K562 (cell line): ENCODE measurements at regions of chr10 and their contacts with region 1.

Region 1: DNA sequence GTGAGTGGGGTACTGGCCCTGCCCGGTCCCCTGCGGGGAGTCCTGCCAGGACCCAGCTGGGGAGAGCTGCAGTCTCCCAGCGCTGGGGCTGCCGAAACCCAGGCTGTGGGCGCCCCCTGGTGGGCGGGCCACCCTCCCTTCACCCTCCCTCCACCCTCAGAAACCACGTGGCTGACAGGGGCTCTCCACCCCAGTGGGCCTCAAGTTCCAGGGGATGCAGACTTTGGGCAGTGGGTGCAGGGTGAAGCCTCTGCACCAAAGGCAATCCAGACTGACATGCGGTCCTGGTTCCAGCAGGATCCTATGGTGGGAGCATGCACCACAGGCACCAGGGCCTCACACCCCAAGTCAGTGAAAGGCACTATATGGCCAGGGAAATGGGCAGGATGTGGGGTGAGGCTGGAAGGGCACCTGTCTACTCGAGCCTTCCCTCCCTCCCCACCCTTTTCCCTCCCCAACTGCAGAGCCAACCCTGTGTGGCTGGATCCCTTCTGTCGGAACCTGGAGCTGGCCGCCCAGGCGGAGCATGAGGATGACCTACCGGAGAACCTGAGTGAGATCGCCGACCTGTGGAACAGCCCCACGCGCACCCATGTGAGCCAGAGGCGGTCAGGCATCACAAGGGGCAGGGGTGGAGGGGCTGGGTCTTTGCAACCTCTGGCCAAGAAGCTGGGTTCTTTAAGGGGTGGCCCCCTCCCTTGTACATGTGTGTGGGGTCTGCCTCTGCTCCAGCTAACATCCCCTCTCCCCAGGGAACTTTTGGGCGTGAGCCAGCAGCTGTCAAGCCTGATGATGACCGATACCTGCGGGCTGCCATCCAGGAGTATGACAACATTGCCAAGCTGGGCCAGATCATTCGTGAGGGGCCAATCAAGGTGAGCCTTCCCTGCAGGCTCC is 38.8 kb downstream of the PSAP start:
- DNase-seq: peak; percentile 83 to 92 (median 90)
- ATAC-seq: peak; percentile 94
- H3K4me3 ChIP-seq: no peak overlapping the region
- H3K27ac ChIP-seq: no peak overlapping the region
- H3K4me1 ChIP-seq: peaks cover 0 to 43% of the 10 kb centered on the region in 2 experiments; a peak in 3 of 5 replicates
- H3K27me3 ChIP-seq: no peaks in the 10 kb centered on the region
- CTCF ChIP-seq: peak; percentile 91 to 95 (median 94)
- EP300 ChIP-seq: no peak
- POLR2A ChIP-seq: no peak
- RAD21 ChIP-seq: peak; percentile 96 to 97

Region 2: DNA sequence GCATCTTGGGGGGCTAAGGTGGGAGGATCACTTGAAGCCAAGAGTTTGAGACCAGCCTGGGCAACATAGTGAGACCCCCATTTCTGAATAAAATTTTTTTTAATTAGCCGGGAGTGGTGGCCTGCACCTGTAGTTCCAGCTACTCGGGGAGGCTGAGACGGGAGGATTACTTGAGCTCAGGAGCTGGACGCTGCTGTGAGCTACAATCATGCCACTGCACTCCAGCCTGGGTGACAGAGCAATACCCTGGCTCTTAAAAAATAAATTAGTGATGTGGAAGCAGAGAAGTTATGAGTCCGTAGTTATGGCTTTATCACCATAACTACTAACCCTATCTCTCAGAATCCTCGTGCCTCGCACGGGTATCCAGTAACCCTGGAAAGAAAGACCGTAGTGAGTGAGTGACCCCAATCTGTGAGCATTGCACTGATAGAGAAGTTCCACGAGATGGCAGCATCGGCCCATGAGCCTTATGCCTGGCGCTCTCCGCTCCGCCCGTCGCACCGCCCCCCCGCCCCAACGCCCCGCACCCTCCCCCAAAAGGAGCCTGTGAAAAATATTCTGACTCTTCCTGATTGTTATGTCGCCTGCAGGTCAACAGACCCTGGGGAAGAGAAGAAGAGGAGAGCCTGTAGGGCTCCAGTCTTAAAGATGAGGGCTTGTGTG is 498.1 kb before region 1 on chr10:
- CTCF ChIA-PET with region 1: interaction called, 8 read pairs
- POLR2A ChIA-PET with region 1: no interaction called
- in situ Hi-C with region 1: loop called (anchors 5 kb)
- intact Hi-C with region 1: loop called (anchors 5 kb)
- DNase-seq: peak; percentile 79 to 91 (median 90)
- ATAC-seq: peak; percentile 73
- H3K4me3 ChIP-seq: no peak overlapping the region
- H3K27ac ChIP-seq: no peak overlapping the region
- H3K4me1 ChIP-seq: peaks cover 8 to 9% of the 10 kb centered on the region in 2 experiments; a peak in 4 of 5 replicates
- H3K27me3 ChIP-seq: peaks cover 0 to 10% of the 10 kb centered on the region in 2 experiments; a peak in 2 of 5 replicates
- CTCF ChIP-seq: peak; percentile 68 to 82 (median 76)
- EP300 ChIP-seq: no peak
- POLR2A ChIP-seq: no peak
- RAD21 ChIP-seq: peak; percentile 64 to 78

Region 3: DNA sequence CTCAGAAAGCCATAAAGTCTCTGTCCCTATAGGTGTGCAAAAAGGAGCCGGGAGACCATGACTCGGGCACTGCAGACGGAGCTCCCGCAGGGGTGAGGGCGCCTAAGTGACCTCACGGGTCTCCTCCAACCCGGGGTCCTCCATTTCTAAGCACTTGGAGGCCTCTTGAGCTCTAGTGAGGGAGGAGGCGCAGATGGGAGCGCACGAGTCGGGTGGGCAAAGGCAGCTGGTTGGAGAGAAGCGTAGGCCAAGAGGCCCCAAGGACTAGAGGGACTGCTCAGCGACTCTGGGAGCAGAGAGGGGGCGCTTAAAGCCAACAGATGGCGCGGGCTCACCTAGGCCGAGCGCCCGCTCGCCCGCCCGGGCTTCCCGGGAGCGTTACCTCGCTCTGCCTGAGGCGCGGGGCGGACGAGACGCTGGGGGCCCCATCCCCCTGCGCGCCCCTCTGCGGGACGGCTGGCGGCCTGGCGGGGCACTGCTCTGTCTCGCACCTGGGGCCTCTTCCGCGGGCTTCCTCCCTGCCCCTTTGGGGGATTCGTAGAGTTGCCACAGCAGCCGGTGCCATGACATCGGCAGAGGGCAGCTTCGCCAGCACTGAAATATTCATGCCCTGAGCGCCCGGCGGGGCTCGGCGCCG is 416.1 kb before region 1 on chr10:
- CTCF ChIA-PET with region 1: no interaction called
- POLR2A ChIA-PET with region 1: no interaction called
- in situ Hi-C with region 1: no loop called
- intact Hi-C with region 1: loop called (anchors 5 kb)
- DNase-seq: peak; percentile 57 to 63 (median 59)
- ATAC-seq: peak; percentile 92
- H3K4me3 ChIP-seq: no peak overlapping the region
- H3K27ac ChIP-seq: no peak overlapping the region
- H3K4me1 ChIP-seq: peaks cover 0 to 20% of the 10 kb centered on the region in 2 experiments; a peak in 2 of 5 replicates
- H3K27me3 ChIP-seq: peaks cover 64 to 91% of the 10 kb centered on the region in 2 experiments
- CTCF ChIP-seq: peak; percentile 62 to 73 (median 71)
- EP300 ChIP-seq: no peak
- POLR2A ChIP-seq: no peak
- RAD21 ChIP-seq: peak; percentile 61 to 80

Region 4: GRCh38 chr10:71671994-71672946 is 140.0 kb before region 1 on chr10:
- CTCF ChIA-PET with region 1: no interaction called
- POLR2A ChIA-PET with region 1: no interaction called
- in situ Hi-C with region 1: no loop called
- intact Hi-C with region 1: no loop called
- DNase-seq: peak; percentile 41 to 73 (median 58)
- ATAC-seq: peak; percentile 48
- H3K4me3 ChIP-seq: no peak overlapping the region
- H3K27ac ChIP-seq: no peak overlapping the region
- H3K4me1 ChIP-seq: peaks cover 0 to 21% of the 10 kb centered on the region in 2 experiments; a peak in 3 of 5 replicates
- H3K27me3 ChIP-seq: no peaks in the 10 kb centered on the region
- CTCF ChIP-seq: no peak
- EP300 ChIP-seq: no peak
- POLR2A ChIP-seq: no peak
- RAD21 ChIP-seq: no peak

Region 5: GRCh38 chr10:71696628-71697326 is 115.5 kb before region 1 on chr10:
- CTCF ChIA-PET with region 1: no interaction called
- POLR2A ChIA-PET with region 1: interaction called, 3 read pairs
- in situ Hi-C with region 1: no loop called
- intact Hi-C with region 1: loop called (anchors 5 kb)
- DNase-seq: peak; percentile 86 to 92 (median 90)
- ATAC-seq: peak; percentile 94
- H3K4me3 ChIP-seq: no peak overlapping the region
- H3K27ac ChIP-seq: no peak overlapping the region
- H3K4me1 ChIP-seq: peaks cover 13 to 51% of the 10 kb centered on the region in 2 experiments
- H3K27me3 ChIP-seq: no peaks in the 10 kb centered on the region
- CTCF ChIP-seq: peak; percentile 93 to 99 (median 95)
- EP300 ChIP-seq: no peak
- POLR2A ChIP-seq: no peak
- RAD21 ChIP-seq: peak; percentile 64 to 89

Region 6: GRCh38 chr10:71780722-71781121 is 31.5 kb before region 1 on chr10:
- CTCF ChIA-PET with region 1: interaction called, 4 read pairs
- POLR2A ChIA-PET with region 1: interaction called, 3 read pairs
- in situ Hi-C with region 1: no loop called
- intact Hi-C with region 1: loop called (anchors 2 kb)
- DNase-seq: peak; percentile 38 to 66 (median 50)
- ATAC-seq: peak; percentile 68
- H3K4me3 ChIP-seq: no peak overlapping the region
- H3K27ac ChIP-seq: no peak overlapping the region
- H3K4me1 ChIP-seq: peaks cover 0 to 3% of the 10 kb centered on the region in 2 experiments; a peak in 2 of 5 replicates
- H3K27me3 ChIP-seq: peaks cover 26 to 57% of the 10 kb centered on the region in 2 experiments
- CTCF ChIP-seq: peak; percentile 67 to 78 (median 68)
- EP300 ChIP-seq: no peak
- POLR2A ChIP-seq: no peak
- RAD21 ChIP-seq: peak; percentile 65 to 83

Region 7: GRCh38 chr10:71829171-71829570 is 16.9 kb after region 1 on chr10:
- CTCF ChIA-PET with region 1: no interaction called
- POLR2A ChIA-PET with region 1: interaction called, 31 read pairs
- in situ Hi-C with region 1: no loop called
- intact Hi-C with region 1: loop called (anchors 2 kb)
- DNase-seq: peak in 1 of 4 experiments; percentile 50
- ATAC-seq: peak; percentile 23; the same call in 1 of the 3 replicates
- H3K4me3 ChIP-seq: no peak overlapping the region
- H3K27ac ChIP-seq: no peak overlapping the region
- H3K4me1 ChIP-seq: peaks cover 0 to 2% of the 10 kb centered on the region in 2 experiments; a peak in 1 of 5 replicates
- H3K27me3 ChIP-seq: no peaks in the 10 kb centered on the region
- CTCF ChIP-seq: no peak
- EP300 ChIP-seq: no peak
- POLR2A ChIP-seq: no peak
- RAD21 ChIP-seq: no peak